ENCODE measurements at regions of chr2 and their contacts with region 1.

Region 1: GRCh38 chr2:190534310-190535120 is at the start of gene NEMP2:
- DNase-seq: peak; percentile 77
- ATAC-seq: peak; percentile 91
- H3K4me3 ChIP-seq: peak within 1 kb of the TSS; percentile 77 to 90 (median 85)
- H3K27ac ChIP-seq: peak within 1 kb of the TSS; percentile 91
- H3K4me1 ChIP-seq: peaks cover 50% of the 10 kb centered on the region
- H3K27me3 ChIP-seq: no peaks in the 10 kb centered on the region
- CTCF ChIP-seq: peak; percentile 37; the same call in 1 of the 2 replicates
- EP300 ChIP-seq: peak; percentile 32 to 36; a peak in 2 of 4 replicates
- POLR2A ChIP-seq: peak; percentile 90
- RAD21 ChIP-seq: peak; percentile 75
- total RNA-seq, gene NEMP2: 7.8 and 9.8 TPM in 2 replicates

Region 2: DNA sequence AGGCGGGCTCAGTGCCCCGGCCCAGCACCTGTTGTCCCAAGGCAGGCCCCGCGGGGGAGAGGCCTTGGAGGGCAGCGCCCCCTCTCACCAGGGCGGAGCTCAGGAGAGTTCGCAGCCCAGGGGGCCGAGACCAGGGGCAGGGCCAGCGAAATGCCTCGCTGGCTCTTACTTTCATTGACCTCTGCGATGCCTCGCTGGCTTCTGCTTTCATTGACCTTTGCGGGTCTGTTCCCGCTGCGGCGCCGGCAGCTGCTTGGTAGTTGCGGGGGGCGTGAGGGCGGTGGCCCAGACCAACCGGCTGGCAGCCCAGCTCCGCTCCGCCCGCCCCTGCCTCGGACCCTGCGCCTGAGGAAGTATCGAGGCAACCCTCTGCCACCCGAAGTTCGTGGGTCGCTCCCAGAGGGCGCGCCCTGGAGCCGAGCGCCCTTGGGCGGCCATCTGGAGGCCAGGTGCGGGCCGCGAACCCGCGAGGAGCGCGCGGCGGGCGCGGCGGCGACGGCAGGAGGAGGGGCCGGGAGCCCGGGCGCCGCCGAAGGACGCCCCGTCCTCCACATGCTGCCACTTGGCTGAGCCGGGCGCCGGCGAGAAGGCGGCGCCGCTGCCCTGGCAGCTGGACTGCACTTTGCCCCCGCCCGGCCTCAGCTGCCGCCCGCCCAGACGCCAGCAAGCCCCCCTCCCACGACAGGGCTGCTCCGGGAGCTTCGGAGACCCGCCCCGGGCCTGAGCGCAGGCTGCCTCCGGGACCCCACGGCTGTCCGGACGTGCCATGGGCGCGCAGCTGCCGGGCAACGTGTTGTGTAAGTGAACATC is 354.0 kb before region 1 on chr2:
- CTCF ChIA-PET with region 1: no interaction called
- POLR2A ChIA-PET with region 1: interaction called, 11 read pairs
- in situ Hi-C with region 1: no loop called
- intact Hi-C with region 1: no loop called
- DNase-seq: peak; percentile 86
- ATAC-seq: peak; percentile 94
- H3K4me3 ChIP-seq: peak overlapping the region; percentile 63 to 89 (median 77)
- H3K27ac ChIP-seq: peak overlapping the region; percentile 64
- H3K4me1 ChIP-seq: peaks cover 23% of the 10 kb centered on the region
- H3K27me3 ChIP-seq: no peaks in the 10 kb centered on the region; a peak in 1 of 5 replicates
- CTCF ChIP-seq: peak; percentile 95
- EP300 ChIP-seq: 0 out of 4 replicates have a peak, but pooled peaks of 1 of the 2 experiments have one; percentile 6
- POLR2A ChIP-seq: peak; percentile 31 to 80
- RAD21 ChIP-seq: peak; percentile 92

Region 3: GRCh38 chr2:190583507-190584337 is 49.2 kb after region 1 on chr2:
- CTCF ChIA-PET with region 1: no interaction called
- POLR2A ChIA-PET with region 1: no interaction called
- in situ Hi-C with region 1: no loop called
- intact Hi-C with region 1: no loop called
- DNase-seq: no peak
- ATAC-seq: no peak
- H3K4me3 ChIP-seq: no peak overlapping the region
- H3K27ac ChIP-seq: no peak overlapping the region
- H3K4me1 ChIP-seq: peaks cover 20% of the 10 kb centered on the region
- H3K27me3 ChIP-seq: no peaks in the 10 kb centered on the region
- CTCF ChIP-seq: no peak
- EP300 ChIP-seq: no peak
- POLR2A ChIP-seq: no peak
- RAD21 ChIP-seq: no peak

Region 4: DNA sequence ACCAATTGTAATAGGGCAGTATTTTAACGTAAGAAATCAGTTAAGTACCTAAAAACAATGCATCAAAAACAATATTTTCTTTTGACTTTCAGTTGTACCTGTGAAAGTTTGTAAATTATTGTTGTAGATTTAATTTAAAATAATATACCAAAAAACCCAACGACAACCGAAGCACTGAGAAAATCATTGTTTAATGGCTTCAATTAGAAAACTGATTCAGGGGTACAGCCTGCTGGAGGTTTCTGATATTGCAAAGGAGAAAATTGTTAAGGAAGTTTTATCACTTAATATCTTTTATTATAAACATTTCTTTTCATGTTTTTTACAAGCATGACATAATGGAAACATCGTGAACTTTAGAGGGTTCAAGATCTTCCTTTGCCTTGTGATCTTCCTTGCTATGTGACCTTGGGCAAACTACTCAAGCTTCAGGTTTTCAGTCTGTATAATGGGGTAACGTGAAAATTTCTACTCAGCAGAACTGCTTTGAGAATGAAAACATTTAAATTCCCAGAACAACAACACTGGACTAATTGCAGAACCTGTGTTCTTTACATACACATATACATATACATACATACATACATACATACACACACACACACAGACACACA is 269.8 kb after region 1 on chr2:
- CTCF ChIA-PET with region 1: no interaction called
- POLR2A ChIA-PET with region 1: interaction called, 4 read pairs
- in situ Hi-C with region 1: no loop called
- intact Hi-C with region 1: loop called (anchors 10 kb)
- DNase-seq: no peak
- ATAC-seq: no peak
- H3K4me3 ChIP-seq: no peak overlapping the region
- H3K27ac ChIP-seq: no peak overlapping the region
- H3K4me1 ChIP-seq: peaks cover 53% of the 10 kb centered on the region
- H3K27me3 ChIP-seq: no peaks in the 10 kb centered on the region
- CTCF ChIP-seq: peak; percentile 26; the same call in 1 of the 2 replicates
- EP300 ChIP-seq: no peak
- POLR2A ChIP-seq: no peak
- RAD21 ChIP-seq: no peak